ENCODE measurements at regions of chr14 and their contacts with region 1.

Region 1: DNA sequence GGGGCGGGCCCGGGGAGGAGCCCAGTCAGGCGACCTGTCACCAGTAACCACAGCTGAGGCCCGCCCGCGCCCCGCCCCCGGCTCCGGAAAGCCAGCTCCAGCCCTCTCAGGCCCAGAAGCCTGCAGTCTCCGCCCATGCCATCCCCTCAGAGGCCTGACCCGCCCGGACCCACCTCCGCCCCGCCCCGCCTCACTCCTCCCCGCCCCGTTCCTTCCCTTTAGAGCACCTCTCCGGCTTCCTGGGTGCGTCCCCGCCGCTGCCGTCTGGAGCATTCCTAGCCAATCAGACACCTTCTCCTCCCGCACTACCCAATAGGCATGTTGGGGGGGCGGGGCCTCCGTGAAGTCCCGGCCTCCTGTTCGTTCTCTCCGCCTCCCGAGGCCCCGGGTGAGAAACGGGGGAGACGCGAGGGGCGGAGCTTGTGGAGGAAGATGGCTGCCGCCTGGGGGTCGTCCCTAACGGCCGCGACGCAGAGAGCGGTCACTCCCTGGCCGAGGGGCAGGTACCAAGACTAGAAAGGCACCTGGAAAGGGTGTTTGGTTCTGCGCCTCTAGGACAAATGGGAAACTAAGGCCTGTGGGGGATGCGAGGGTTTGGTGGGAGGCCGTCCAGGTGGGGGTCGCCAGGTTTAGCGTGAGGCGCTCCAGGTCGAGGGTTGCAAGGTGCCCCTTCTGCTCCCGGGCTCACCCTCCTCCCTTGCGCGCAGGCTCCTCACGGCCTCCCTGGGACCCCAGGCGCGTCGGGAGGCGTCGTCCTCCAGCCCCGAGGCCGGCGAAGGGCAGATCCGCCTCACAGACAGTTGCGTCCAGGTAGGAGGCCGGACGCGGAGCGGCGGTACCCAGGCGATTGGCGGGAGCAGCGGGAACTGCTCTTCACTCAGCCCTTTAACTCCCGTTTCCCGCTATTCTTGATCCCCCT is at the start of gene ISCA2:
- DNase-seq: peak; percentile 99
- ATAC-seq: peak; percentile 93
- H3K4me3 ChIP-seq: peak within 1 kb of the TSS; percentile 93
- H3K27ac ChIP-seq: peak within 1 kb of the TSS; percentile 72
- H3K4me1 ChIP-seq: peaks cover 7% of the 10 kb centered on the region
- H3K27me3 ChIP-seq: no peaks in the 10 kb centered on the region
- CTCF ChIP-seq: no peak
- POLR2A ChIP-seq: peak; percentile 63; the same call in 1 of the 2 replicates
- RAD21 ChIP-seq: no peak
- total RNA-seq, gene ISCA2: 5.4 and 9.2 TPM in 2 replicates

Region 2: GRCh38 chr14:74762917-74763802 is 269.6 kb after region 1 on chr14 and contains the start of gene YLPM1:
- CTCF ChIA-PET with region 1: interaction called, 9 read pairs
- POLR2A ChIA-PET with region 1: interaction called, 18 read pairs
- dilution Hi-C with region 1: no loop called
- in situ Hi-C with region 1: no loop called
- intact Hi-C with region 1: no loop called
- DNase-seq: peak; percentile 98
- ATAC-seq: peak; percentile 98
- H3K4me3 ChIP-seq: peak within 1 kb of the TSS; percentile 75
- H3K27ac ChIP-seq: peak within 1 kb of the TSS; percentile 78
- H3K4me1 ChIP-seq: peaks cover 4% of the 10 kb centered on the region; the same call in 1 of the 2 replicates
- H3K27me3 ChIP-seq: no peaks in the 10 kb centered on the region
- CTCF ChIP-seq: peak; percentile 75
- POLR2A ChIP-seq: peak; percentile 91
- RAD21 ChIP-seq: 0 out of 2 replicates have a peak, but pooled peaks have one; percentile 6
- total RNA-seq, gene YLPM1: 8.2 and 16.4 TPM in 2 replicates

Measured in IMR-90 (cell line).